ENCODE measurements at regions of chr12 and their contacts with region 1.

Region 1: GRCh38 chr12:14845350-14845750 is 2.0 kb upstream of the ART4 start:
- DNase-seq: peak in 2 of 5 donors; percentile 49 to 51
- ATAC-seq: peak; percentile 28 to 51 (median 41)
- H3K4me3 ChIP-seq: no peak overlapping the region
- H3K27ac ChIP-seq: peak overlapping the region in 10 of 12 donors; percentile 29 to 72 (median 46)
- H3K4me1 ChIP-seq: peaks cover 3 to 70% (median 50%) of the 10 kb centered on the region in 12 donors
- H3K27me3 ChIP-seq: no peaks in the 10 kb centered on the region
- CTCF ChIP-seq: peak; percentile 62 to 85 (median 76)
- POLR2A ChIP-seq: no peak

Region 2: DNA sequence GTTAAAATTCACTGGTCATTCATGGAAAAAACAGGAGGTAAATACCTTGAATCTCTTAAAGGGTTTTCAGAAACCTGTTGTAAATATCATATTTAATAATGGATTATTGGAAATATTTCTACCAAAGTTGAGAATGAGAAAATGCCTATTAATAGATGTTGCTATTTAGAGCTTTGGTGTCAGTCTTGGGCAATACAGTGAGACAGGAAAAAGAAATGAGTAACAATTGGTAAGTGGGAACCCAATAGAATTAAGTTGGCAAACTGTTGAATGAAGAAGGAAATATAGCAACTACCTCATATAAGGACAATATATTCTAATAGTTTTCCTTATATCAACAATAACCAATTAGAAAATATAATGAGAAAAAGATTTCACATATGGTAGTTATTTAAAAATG is 401.8 kb before region 1 on chr12:
- intact Hi-C with region 1: no loop called
- DNase-seq: no peak
- ATAC-seq: peak in 3 of 4 donors; percentile 51 to 81 (median 75)
- H3K4me3 ChIP-seq: no peak overlapping the region
- H3K27ac ChIP-seq: peak overlapping the region; percentile 17 to 70 (median 46)
- H3K4me1 ChIP-seq: peaks cover 0 to 29% (median 20%) of the 10 kb centered on the region in 12 donors
- H3K27me3 ChIP-seq: no peaks in the 10 kb centered on the region
- CTCF ChIP-seq: no peak
- POLR2A ChIP-seq: no peak

Region 3: DNA sequence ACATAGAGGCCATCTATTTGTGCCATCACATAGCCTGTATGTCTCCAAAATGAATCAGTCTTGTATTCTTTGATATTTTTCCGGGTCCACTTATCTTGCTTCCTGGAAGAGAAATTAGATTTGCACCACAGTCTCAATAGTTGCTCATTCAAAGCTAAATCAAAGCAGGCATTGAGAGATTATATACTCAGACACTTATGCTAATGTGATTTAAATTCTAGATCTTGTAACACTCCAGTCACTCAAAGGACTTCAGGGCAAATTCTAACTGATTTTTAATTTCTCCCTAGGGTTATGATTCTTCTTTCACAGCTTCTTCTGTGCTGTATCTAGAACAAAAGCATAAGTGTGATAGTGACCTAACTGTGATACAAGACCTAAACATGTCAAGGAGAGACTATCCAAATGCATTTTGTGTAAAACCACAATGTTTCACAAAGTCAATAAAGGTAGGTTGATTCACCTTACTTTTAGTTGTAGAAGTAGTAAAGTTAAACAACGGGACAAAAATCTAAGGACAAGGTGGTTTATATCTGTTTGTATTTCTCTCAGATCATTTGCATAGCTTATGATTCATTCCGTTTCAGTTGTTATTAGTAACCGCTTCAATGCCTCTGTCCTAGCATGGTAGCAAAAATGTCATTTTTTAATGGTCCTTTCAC is 304.4 kb before region 1 on chr12:
- intact Hi-C with region 1: no loop called
- DNase-seq: no peak
- ATAC-seq: no peak
- H3K4me3 ChIP-seq: no peak overlapping the region
- H3K27ac ChIP-seq: no peak overlapping the region
- H3K4me1 ChIP-seq: no peaks in the 10 kb centered on the region
- H3K27me3 ChIP-seq: no peaks in the 10 kb centered on the region
- CTCF ChIP-seq: no peak
- POLR2A ChIP-seq: no peak

Region 4: DNA sequence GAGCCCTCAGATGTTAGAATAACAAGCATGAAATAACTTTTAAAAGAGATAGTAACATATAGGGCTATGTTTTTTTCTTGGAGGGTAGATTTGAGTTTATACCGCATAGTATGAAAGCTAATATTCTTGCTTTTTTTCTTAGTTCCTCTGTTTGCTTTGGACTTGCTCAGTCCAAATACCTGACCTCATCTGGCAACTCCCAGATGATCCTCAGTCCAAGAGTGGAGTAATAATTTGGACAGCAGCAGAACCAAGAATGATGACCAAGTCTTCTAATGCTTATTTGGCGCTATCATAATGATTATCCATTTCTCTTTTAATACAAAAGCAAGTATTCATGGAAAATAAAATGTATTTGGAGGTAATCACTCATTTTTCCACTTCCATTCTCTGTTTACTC is 194.6 kb before region 1 on chr12:
- intact Hi-C with region 1: no loop called
- DNase-seq: no peak
- ATAC-seq: peak in 3 of 4 donors; percentile 49 to 67 (median 55)
- H3K4me3 ChIP-seq: peak overlapping the region in 1 of 12 donors; percentile 3
- H3K27ac ChIP-seq: peak overlapping the region in 3 of 12 donors; percentile 7 to 37 (median 12)
- H3K4me1 ChIP-seq: no peaks in the 10 kb centered on the region
- H3K27me3 ChIP-seq: no peaks in the 10 kb centered on the region
- CTCF ChIP-seq: no peak
- POLR2A ChIP-seq: no peak

Region 5: DNA sequence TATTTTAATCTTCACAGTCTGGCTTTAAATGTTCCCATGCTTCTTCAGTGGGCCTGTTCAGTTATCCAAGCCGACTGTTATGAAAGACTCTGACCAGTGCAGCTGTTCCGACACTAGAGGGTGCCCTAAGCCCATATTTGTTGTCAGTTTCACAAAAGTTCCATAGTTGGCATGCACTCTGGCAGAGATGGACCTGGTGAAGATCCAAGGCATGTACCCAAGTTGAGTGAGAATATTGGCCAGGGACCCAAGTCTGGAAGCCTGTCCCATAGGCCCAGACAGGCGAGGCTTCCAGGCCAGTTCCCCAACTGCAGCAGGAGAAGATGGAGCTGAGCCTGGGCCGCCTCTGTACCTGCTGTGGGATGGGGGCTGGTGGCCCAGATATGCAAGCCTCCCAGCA is 121.6 kb before region 1 on chr12:
- intact Hi-C with region 1: loop called in 1 of 10 experiments (anchors 5 kb)
- DNase-seq: peak; percentile 36 to 61 (median 50)
- ATAC-seq: peak; percentile 82 to 95 (median 90)
- H3K4me3 ChIP-seq: no peak overlapping the region
- H3K27ac ChIP-seq: no peak overlapping the region
- H3K4me1 ChIP-seq: no peaks in the 10 kb centered on the region
- H3K27me3 ChIP-seq: no peaks in the 10 kb centered on the region
- CTCF ChIP-seq: peak; percentile 51 to 77 (median 64)
- POLR2A ChIP-seq: no peak

Region 6: DNA sequence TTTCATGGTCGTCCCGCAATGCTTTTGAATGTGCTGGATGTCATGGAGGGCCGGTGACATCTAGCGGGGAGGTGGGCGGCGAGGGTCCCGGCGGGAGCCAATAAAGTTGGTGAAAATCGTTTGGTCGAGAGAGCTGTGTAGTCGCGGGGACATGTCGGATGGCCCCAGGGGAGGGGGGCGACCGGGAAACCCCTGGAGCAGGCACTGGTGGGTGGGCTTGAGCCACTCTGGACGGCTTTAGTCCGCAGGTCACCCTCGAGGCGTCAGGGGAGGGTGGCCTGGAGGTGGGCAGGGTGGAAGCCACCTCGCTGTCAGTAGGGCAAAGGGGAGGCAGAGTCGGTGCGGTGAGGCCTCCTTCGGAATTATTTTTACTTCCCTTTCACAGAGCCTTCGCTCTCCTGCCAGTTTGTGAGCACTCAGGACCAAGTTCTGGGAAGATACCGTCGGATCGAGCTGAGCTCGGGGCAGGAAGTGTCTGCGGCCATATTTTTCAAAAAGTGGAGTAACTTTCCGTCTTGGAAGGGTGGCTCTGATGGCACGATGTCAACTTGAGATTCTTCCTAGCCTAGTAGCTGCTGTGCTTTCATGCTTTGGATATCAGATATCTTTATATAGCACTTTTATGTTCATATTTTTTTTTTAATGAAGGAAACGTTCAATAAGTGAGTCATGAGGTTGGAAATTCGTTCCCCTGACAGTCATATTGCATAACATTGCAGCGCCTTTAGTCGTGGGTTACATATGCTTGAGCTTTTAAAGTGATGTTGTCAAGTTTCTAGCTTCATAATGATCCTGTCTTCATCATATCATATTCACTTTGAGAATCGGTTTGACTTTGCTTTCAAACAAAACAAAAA is 70.2 kb before region 1 on chr12:
- intact Hi-C with region 1: loop called in 2 of 10 experiments (anchors 5 kb)
- DNase-seq: peak; percentile 29 to 74 (median 44)
- ATAC-seq: peak in 3 of 4 donors; percentile 15 to 33 (median 19)
- H3K4me3 ChIP-seq: peak overlapping the region; percentile 56 to 89 (median 79)
- H3K27ac ChIP-seq: peak overlapping the region; percentile 85 to 98 (median 90)
- H3K4me1 ChIP-seq: peaks cover 0 to 26% (median 9%) of the 10 kb centered on the region in 12 donors
- H3K27me3 ChIP-seq: no peaks in the 10 kb centered on the region
- CTCF ChIP-seq: peak in 1 of 12 donors; percentile 8
- POLR2A ChIP-seq: no peak

Region 7: GRCh38 chr12:14885718-14886221 is 40.4 kb after region 1 on chr12 and contains the start of gene MGP:
- intact Hi-C with region 1: loop called in 8 of 10 experiments (anchors 2 to 5 kb)
- DNase-seq: peak in 4 of 5 donors; percentile 46 to 69 (median 58)
- ATAC-seq: peak; percentile 79 to 93 (median 88)
- H3K4me3 ChIP-seq: peak within 1 kb of the TSS; percentile 1 to 68 (median 48)
- H3K27ac ChIP-seq: peak within 1 kb of the TSS; percentile 50 to 89 (median 79)
- H3K4me1 ChIP-seq: peaks cover 0 to 43% (median 8%) of the 10 kb centered on the region in 12 donors
- H3K27me3 ChIP-seq: no peaks in the 10 kb centered on the region
- CTCF ChIP-seq: no peak
- POLR2A ChIP-seq: peak in 1 of 2 donors; percentile 52
- total RNA-seq, gene MGP: 147 to 651 (median 255) TPM

Region 8: GRCh38 chr12:14948672-14949071 is 103.3 kb after region 1 on chr12:
- intact Hi-C with region 1: loop called in 1 of 10 experiments (anchors 5 kb)
- DNase-seq: peak in 2 of 5 donors; percentile 36 to 39
- ATAC-seq: peak; percentile 73 to 93 (median 88)
- H3K4me3 ChIP-seq: peak overlapping the region in 3 of 12 donors; percentile 2 to 17 (median 4)
- H3K27ac ChIP-seq: peak overlapping the region; percentile 15 to 92 (median 76)
- H3K4me1 ChIP-seq: peaks cover 5 to 79% (median 50%) of the 10 kb centered on the region in 12 donors
- H3K27me3 ChIP-seq: no peaks in the 10 kb centered on the region
- CTCF ChIP-seq: no peak
- POLR2A ChIP-seq: peak in 1 of 2 donors; percentile 55

Region 9: GRCh38 chr12:15151161-15152120 is 306.1 kb after region 1 on chr12:
- intact Hi-C with region 1: loop called in 1 of 10 experiments (anchors 5 kb)
- DNase-seq: peak in 1 of 5 donors; percentile 20
- ATAC-seq: peak; percentile 48 to 75 (median 60)
- H3K4me3 ChIP-seq: no peak overlapping the region
- H3K27ac ChIP-seq: peak overlapping the region in 8 of 12 donors; percentile 11 to 69 (median 46)
- H3K4me1 ChIP-seq: peaks cover 0 to 27% (median 7%) of the 10 kb centered on the region in 12 donors
- H3K27me3 ChIP-seq: no peaks in the 10 kb centered on the region
- CTCF ChIP-seq: peak; percentile 24 to 67 (median 47)
- POLR2A ChIP-seq: no peak

Region 10: DNA sequence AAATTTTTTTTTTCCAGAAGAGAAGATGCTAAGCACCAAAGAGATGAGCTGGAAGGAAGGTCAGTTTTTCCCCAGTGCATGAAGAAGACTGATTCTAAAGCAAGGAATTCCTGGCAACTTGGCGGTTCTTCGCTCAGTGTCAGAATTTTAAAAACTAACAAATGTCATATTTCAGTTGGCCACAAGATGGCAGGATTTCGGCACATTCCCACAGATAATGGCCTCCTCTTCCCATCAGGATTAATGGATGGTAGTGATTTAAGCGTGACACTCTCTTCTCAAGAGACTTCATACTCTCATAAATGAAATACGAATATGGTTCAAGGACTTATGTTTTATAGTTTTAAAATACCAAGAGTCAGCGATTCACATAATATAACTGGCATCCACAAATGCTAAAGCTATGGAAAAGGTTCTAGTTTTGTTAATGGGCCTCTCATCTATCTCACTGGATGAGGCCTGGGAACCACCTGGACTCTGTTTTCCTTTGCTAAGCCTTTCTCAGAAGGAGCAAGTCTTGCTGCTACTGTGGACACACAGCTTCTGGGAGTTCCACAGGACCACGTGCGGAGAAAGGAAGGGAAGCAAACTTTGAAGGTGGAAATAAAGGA is 430.8 kb after region 1 on chr12:
- intact Hi-C with region 1: loop called in 3 of 10 experiments (anchors 10 kb)
- DNase-seq: peak in 1 of 5 donors; percentile 14
- ATAC-seq: peak in 2 of 4 donors; percentile 49 to 61
- H3K4me3 ChIP-seq: no peak overlapping the region
- H3K27ac ChIP-seq: no peak overlapping the region
- H3K4me1 ChIP-seq: peaks cover 0 to 15% (median 11%) of the 10 kb centered on the region in 12 donors
- H3K27me3 ChIP-seq: peaks cover 0 to 8% (median 0%) of the 10 kb centered on the region in 9 donors
- CTCF ChIP-seq: peak; percentile 56 to 80 (median 72)
- POLR2A ChIP-seq: no peak

Measured in heart left ventricle (tissue), 16 donors.